ENCODE measurements at regions of chr5 and their contacts with region 1.

Region 1: GRCh38 chr5:127564002-127564769 is 46.7 kb downstream of the PRRC1 start:
- DNase-seq: peak in 8 of 9 donors; percentile 21 to 61 (median 47)
- ATAC-seq: peak; percentile 79
- H3K4me3 ChIP-seq: no peak overlapping the region
- H3K4me3 Mint-ChIP-seq: no peak overlapping the region
- H3K27ac ChIP-seq: no peak overlapping the region
- H3K27ac Mint-ChIP-seq: no peak overlapping the region
- H3K4me1 ChIP-seq: no peaks in the 10 kb centered on the region
- H3K4me1 Mint-ChIP-seq: peaks cover 0 to 16% (median 0%) of the 10 kb centered on the region in 7 donors
- H3K27me3 ChIP-seq: no peaks in the 10 kb centered on the region
- H3K27me3 Mint-ChIP-seq: peaks cover 12 to 32% (median 20%) of the 10 kb centered on the region in 5 donors

Region 2: DNA sequence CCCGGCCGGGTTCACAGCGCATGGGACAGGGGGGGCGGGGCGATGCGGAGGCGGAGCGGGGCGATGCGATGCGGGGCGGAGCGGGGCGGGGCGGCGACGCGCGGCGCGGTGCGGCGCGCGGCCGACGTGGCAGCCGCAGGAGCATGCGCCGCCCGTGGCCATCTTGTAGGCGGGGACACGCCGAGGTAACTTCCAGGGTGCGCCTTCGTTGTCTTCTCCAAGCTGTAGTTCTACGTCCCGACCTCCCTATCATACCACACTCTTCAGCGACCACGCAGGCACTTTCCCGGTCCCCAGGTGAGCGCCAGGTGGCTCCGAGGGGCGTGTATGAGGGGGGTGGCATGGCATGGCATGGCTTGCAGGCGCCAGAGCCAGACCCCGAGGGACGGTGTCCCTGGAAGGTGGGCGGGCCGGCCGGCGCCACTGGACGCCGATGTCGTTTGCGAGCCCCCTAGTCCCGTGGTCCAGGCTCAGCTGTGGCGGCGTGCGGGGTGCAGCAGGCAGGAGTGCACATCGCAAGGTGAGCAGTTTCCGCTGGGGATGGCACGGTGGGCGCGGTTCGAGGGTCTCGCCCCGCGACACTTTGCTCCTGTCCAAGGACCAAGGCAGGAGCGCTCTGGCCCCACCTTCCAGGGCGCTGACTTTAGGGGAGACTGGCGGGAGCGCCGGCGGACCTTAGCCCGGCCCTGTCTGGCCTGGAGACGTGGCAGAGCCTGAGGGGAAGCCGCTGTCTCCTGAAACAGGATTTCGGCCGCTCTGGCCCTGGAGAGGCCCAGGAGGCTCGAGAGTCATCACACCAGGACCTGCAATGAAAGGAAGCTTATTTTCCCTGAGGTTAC is 46.5 kb before region 1 on chr5 and contains the start of gene PRRC1:
- CTCF ChIA-PET with region 1: no interaction called
- POLR2A ChIA-PET with region 1: no interaction called
- intact Hi-C with region 1: no loop called
- DNase-seq: peak; percentile 63 to 80 (median 74)
- ATAC-seq: peak; percentile 99
- H3K4me3 ChIP-seq: peak within 1 kb of the TSS; percentile 94
- H3K4me3 Mint-ChIP-seq: peak within 1 kb of the TSS; percentile 87 to 92 (median 89)
- H3K27ac ChIP-seq: peak within 1 kb of the TSS; percentile 89
- H3K27ac Mint-ChIP-seq: peak within 1 kb of the TSS; percentile 48 to 91 (median 82)
- H3K4me1 ChIP-seq: peaks cover 0 to 18% of the 10 kb centered on the region in 2 donors
- H3K4me1 Mint-ChIP-seq: peaks cover 25 to 48% (median 38%) of the 10 kb centered on the region in 7 donors
- H3K27me3 ChIP-seq: no peaks in the 10 kb centered on the region
- H3K27me3 Mint-ChIP-seq: peaks cover under 1 to 7% (median 6%) of the 10 kb centered on the region in 5 donors
- total RNA-seq, gene PRRC1: 34.6 to 56.6 (median 49.4) TPM

Region 3: GRCh38 chr5:127590156-127590722 is 26.1 kb after region 1 on chr5:
- CTCF ChIA-PET with region 1: no interaction called
- POLR2A ChIA-PET with region 1: no interaction called
- intact Hi-C with region 1: no loop called
- DNase-seq: no peak
- ATAC-seq: no peak
- H3K4me3 ChIP-seq: no peak overlapping the region
- H3K4me3 Mint-ChIP-seq: no peak overlapping the region
- H3K27ac ChIP-seq: no peak overlapping the region
- H3K27ac Mint-ChIP-seq: no peak overlapping the region
- H3K4me1 ChIP-seq: no peaks in the 10 kb centered on the region
- H3K4me1 Mint-ChIP-seq: peaks cover 0 to 10% (median 1%) of the 10 kb centered on the region in 7 donors
- H3K27me3 ChIP-seq: no peaks in the 10 kb centered on the region
- H3K27me3 Mint-ChIP-seq: peaks cover 2 to 26% (median 9%) of the 10 kb centered on the region in 5 donors

Region 4: GRCh38 chr5:127746756-127747155 is 182.6 kb after region 1 on chr5:
- CTCF ChIA-PET with region 1: no interaction called
- POLR2A ChIA-PET with region 1: no interaction called
- intact Hi-C with region 1: loop called in 1 of 2 experiments (anchors 2 kb)
- DNase-seq: peak in 2 of 9 donors; percentile 3 to 6
- ATAC-seq: no peak
- H3K4me3 ChIP-seq: no peak overlapping the region
- H3K4me3 Mint-ChIP-seq: no peak overlapping the region
- H3K27ac ChIP-seq: no peak overlapping the region
- H3K27ac Mint-ChIP-seq: no peak overlapping the region
- H3K4me1 ChIP-seq: no peaks in the 10 kb centered on the region
- H3K4me1 Mint-ChIP-seq: no peaks in the 10 kb centered on the region
- H3K27me3 ChIP-seq: no peaks in the 10 kb centered on the region
- H3K27me3 Mint-ChIP-seq: peaks cover 0 to 18% (median 10%) of the 10 kb centered on the region in 5 donors

Region 5: DNA sequence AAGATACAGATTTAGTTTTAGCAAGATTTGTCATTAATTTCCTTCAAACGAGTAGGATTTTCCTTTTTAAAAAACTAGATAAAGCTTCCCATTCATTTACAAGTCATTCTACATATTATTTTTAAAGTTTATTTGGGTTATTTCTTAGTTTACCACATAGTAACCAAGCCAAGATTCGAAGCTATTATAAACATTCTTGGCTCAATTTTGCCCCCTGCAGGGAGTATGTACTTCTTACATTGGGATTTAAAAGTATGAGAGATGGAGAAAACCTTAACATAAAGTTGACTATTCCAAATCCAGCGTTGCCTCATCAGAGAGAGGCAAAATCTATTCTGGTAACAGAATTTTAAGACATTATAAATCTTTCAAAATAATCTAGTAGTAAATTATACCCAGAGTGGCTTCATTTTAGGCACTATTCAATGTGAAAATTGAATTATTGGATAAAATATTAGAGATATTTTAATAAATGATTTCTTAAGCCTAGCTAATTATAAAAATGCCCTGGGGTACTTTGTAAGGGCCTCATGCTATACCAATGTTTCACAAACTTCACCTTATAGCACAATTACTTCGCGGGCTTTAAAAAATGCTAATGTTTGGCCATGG is 934.8 kb after region 1 on chr5:
- CTCF ChIA-PET with region 1: no interaction called
- POLR2A ChIA-PET with region 1: no interaction called
- intact Hi-C with region 1: loop called in 1 of 2 experiments (anchors 5 kb)
- DNase-seq: no peak
- ATAC-seq: no peak
- H3K4me3 ChIP-seq: no peak overlapping the region
- H3K4me3 Mint-ChIP-seq: no peak overlapping the region
- H3K27ac ChIP-seq: no peak overlapping the region
- H3K27ac Mint-ChIP-seq: no peak overlapping the region
- H3K4me1 ChIP-seq: no peaks in the 10 kb centered on the region
- H3K4me1 Mint-ChIP-seq: no peaks in the 10 kb centered on the region
- H3K27me3 ChIP-seq: no peaks in the 10 kb centered on the region
- H3K27me3 Mint-ChIP-seq: no peaks in the 10 kb centered on the region

Region 6: GRCh38 chr5:128674825-128675446 is 1110.8 kb after region 1 on chr5:
- CTCF ChIA-PET with region 1: no interaction called
- POLR2A ChIA-PET with region 1: no interaction called
- intact Hi-C with region 1: loop called in 1 of 2 experiments (anchors 1 kb)
- DNase-seq: peak in 7 of 9 donors; percentile 1 to 23 (median 4)
- ATAC-seq: peak; percentile 59
- H3K4me3 ChIP-seq: no peak overlapping the region
- H3K4me3 Mint-ChIP-seq: no peak overlapping the region
- H3K27ac ChIP-seq: no peak overlapping the region
- H3K27ac Mint-ChIP-seq: no peak overlapping the region
- H3K4me1 ChIP-seq: no peaks in the 10 kb centered on the region
- H3K4me1 Mint-ChIP-seq: no peaks in the 10 kb centered on the region
- H3K27me3 ChIP-seq: no peaks in the 10 kb centered on the region
- H3K27me3 Mint-ChIP-seq: peaks cover 0 to 11% (median 3%) of the 10 kb centered on the region in 5 donors

Region 7: DNA sequence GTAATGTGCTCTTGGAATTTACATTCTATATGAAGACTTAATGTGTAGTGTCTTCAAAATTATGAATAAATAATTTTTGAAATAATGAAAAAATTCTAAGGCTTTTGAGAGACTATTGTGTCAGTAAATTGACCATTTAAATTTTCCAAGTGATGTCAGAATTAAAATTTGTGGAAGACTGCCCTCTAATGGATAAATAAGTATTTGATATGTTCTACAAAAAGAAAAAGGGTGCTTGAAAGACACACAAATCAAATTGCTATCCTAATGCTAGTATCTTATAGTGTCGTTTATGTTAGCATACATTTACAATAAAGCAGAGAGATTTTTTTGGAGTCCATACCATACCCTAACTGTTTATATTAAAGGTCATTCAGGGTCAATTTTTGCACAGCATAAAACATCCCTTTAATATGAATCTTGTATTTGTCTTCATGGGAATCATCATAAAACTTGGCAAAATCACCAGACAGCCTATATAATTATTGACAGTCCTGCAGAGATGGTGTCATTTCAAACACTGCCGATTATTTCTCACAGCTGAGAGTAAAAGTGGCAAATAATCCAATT is 1280.3 kb after region 1 on chr5:
- CTCF ChIA-PET with region 1: no interaction called
- POLR2A ChIA-PET with region 1: no interaction called
- intact Hi-C with region 1: loop called in 1 of 2 experiments (anchors 5 kb)
- DNase-seq: no peak
- ATAC-seq: no peak
- H3K4me3 ChIP-seq: no peak overlapping the region
- H3K4me3 Mint-ChIP-seq: no peak overlapping the region
- H3K27ac ChIP-seq: no peak overlapping the region
- H3K27ac Mint-ChIP-seq: no peak overlapping the region
- H3K4me1 ChIP-seq: no peaks in the 10 kb centered on the region
- H3K4me1 Mint-ChIP-seq: no peaks in the 10 kb centered on the region
- H3K27me3 ChIP-seq: no peaks in the 10 kb centered on the region
- H3K27me3 Mint-ChIP-seq: no peaks in the 10 kb centered on the region